A549 (cell line): ENCODE measurements at regions of chr6 and their contacts with region 1.

Region 1: GRCh38 chr6:29834564-29835436 is 7.2 kb downstream of the HLA-G start:
- DNase-seq: no peak
- ATAC-seq: peak; percentile 61 to 77; a peak in 3 of 6 replicates
- H3K4me3 ChIP-seq: no peak overlapping the region
- H3K27ac ChIP-seq: no peak overlapping the region
- H3K4me1 ChIP-seq: no peaks in the 10 kb centered on the region
- CTCF ChIP-seq: peak; percentile 72
- EP300 ChIP-seq: no peak
- POLR2A ChIP-seq: no peak
- RAD21 ChIP-seq: peak; percentile 76 to 85

Region 2: DNA sequence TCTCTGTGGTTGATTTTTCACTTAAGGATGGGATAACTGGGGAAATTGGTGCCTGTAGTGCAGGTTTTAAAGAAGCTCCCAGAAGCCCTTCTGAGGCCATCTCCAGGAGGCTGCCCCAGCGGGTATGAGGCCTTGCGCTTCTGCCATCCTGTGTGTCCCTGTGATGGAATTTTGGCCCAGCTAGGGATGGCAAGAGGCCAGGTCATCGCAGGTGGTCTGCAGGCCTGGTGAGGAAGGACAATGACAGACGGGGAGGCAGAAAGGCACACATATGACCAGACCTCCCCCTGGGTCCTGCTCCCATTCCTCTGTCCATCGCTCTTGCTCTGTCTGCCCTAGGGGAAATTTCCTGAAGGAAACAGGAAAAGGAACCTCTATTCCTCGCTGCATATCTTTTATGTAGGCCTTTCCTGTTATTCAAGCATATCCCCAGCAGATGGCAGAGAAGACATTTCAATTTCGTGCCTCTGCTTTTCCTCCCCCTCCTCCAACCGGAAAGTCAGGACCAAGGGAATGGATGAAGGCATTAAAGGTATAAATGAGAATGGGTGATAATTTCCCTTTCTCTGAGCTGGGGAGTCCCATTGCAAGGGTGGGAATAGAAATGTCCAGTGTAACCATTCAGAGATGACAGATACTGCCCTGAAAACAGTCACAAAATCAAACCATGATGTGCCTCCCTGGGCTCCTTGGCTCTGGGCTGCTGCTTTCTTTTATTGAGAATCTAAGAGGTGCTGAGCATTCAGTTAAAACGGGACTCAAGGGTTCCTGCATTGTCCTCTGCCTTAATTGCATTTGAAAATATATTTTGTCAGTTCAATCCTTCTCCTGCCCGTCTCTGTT is 129.2 kb before region 1 on chr6:
- CTCF ChIA-PET with region 1: interaction called, 13 read pairs
- POLR2A ChIA-PET with region 1: no interaction called
- DNase-seq: peak; percentile 38 to 39
- ATAC-seq: peak; percentile 65 to 67; a peak in 5 of 6 replicates
- H3K4me3 ChIP-seq: no peak overlapping the region
- H3K27ac ChIP-seq: no peak overlapping the region
- H3K4me1 ChIP-seq: no peaks in the 10 kb centered on the region
- CTCF ChIP-seq: peak; percentile 60
- EP300 ChIP-seq: no peak
- POLR2A ChIP-seq: no peak
- RAD21 ChIP-seq: peak; percentile 64 to 72

Region 3: DNA sequence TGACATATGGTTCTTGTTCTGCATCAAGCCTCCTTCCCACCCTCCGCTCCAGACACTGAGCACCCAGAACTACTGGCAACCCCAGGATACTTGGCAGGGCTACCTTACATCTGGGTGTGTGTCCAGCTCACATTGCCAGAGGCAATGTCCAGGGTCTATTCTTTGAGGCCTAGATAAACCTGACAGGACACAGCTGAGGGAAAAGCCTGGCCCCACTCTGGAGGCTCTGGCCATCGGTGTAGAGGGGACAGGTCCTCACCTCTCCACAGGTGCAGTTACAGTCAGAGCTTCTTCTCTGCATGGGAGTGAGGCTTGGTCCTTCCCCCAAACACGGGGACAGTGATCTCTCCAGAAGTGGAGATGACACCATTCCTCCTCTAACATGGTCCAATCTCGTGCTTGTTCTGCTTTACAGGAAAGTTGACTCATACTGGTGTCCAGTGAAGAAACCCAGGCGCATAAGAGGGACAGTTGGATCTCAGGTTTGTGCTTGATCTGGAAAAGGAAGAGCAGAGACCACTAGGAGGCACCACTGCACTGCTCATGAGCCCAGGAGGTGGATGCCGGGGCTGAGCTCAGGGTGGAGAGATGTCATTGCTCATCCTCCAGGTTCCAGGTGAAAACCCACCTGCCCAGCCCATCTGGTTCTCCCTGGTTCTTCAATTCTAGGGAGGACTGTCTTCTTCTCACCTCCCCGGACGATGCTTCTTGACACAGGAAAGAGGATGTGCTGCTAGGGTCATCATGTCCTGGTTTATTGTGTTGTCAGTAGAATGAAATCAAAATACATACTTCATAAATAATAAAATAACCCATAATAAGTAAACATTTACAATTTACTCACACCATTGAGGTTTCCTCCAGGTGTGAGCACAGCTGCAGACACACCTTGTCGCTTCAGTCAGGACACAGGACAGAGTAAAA is 96.8 kb before region 1 on chr6:
- CTCF ChIA-PET with region 1: interaction called, 25 read pairs
- POLR2A ChIA-PET with region 1: no interaction called
- DNase-seq: peak in 1 of 2 experiments; percentile 68
- ATAC-seq: peak; percentile 95 to 96
- H3K4me3 ChIP-seq: no peak overlapping the region
- H3K27ac ChIP-seq: no peak overlapping the region
- H3K4me1 ChIP-seq: no peaks in the 10 kb centered on the region
- CTCF ChIP-seq: peak; percentile 62
- EP300 ChIP-seq: no peak
- POLR2A ChIP-seq: no peak
- RAD21 ChIP-seq: peak; percentile 78 to 86

Region 4: GRCh38 chr6:30002871-30003270 is 168.1 kb after region 1 on chr6:
- CTCF ChIA-PET with region 1: no interaction called
- POLR2A ChIA-PET with region 1: no interaction called
- DNase-seq: no peak
- ATAC-seq: no peak
- H3K4me3 ChIP-seq: no peak overlapping the region
- H3K27ac ChIP-seq: no peak overlapping the region
- H3K4me1 ChIP-seq: no peaks in the 10 kb centered on the region
- CTCF ChIP-seq: no peak
- EP300 ChIP-seq: no peak
- POLR2A ChIP-seq: no peak
- RAD21 ChIP-seq: no peak